Activated CD4-positive, alpha-beta memory T cell treated with anti-CD3 and anti-CD28 coated beads, Interleukin-2, amount 10 ng/mL, durations not matched to agents 7 days and 5 days (primary cell): ENCODE measurements at regions of chr20 and their contacts with region 1.

Region 1: GRCh38 chr20:51595058-51595532 is 52.6 kb upstream of the NFATC2 start:
- DNase-seq: peak; percentile 85
- H3K4me3 Mint-ChIP-seq: no peak overlapping the region
- H3K27ac Mint-ChIP-seq: peak overlapping the region; percentile 65
- H3K4me1 Mint-ChIP-seq: peaks cover 30% of the 10 kb centered on the region
- H3K27me3 Mint-ChIP-seq: peaks cover 11% of the 10 kb centered on the region

Region 2: GRCh38 chr20:51372176-51372803 is 222.8 kb before region 1 on chr20:
- CTCF ChIA-PET with region 1: interaction called, 47 read pairs
- POLR2A ChIA-PET with region 1: interaction called, 3 read pairs
- DNase-seq: peak; percentile 66
- H3K4me3 Mint-ChIP-seq: no peak overlapping the region
- H3K27ac Mint-ChIP-seq: no peak overlapping the region
- H3K4me1 Mint-ChIP-seq: peaks cover 18% of the 10 kb centered on the region
- H3K27me3 Mint-ChIP-seq: no peaks in the 10 kb centered on the region

Region 3: GRCh38 chr20:51385646-51386530 is 209.2 kb before region 1 on chr20:
- CTCF ChIA-PET with region 1: interaction called, 74 read pairs
- POLR2A ChIA-PET with region 1: interaction called, 9 read pairs
- DNase-seq: peak; percentile 49
- H3K4me3 Mint-ChIP-seq: no peak overlapping the region
- H3K27ac Mint-ChIP-seq: peak overlapping the region; percentile 61
- H3K4me1 Mint-ChIP-seq: peaks cover 73% of the 10 kb centered on the region
- H3K27me3 Mint-ChIP-seq: no peaks in the 10 kb centered on the region

Region 4: DNA sequence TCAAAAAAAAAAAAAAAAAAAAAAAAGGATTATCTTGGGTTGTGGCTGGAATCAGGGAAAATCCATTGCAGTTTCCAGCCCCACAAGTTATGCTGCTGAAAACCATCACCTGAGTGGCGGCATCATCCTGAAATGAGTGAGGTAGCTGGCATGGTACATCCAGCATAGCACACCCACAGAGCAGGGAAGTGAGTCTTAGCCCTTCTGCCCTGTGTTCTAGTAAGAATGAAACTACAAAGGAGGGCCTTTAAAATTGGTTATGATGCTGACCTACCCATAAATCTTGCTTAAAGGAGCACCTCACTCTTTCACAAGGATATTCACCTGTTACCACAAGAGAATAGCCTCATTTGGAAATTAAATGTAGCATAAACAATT is 171.8 kb before region 1 on chr20:
- CTCF ChIA-PET with region 1: interaction called, 12 read pairs
- POLR2A ChIA-PET with region 1: no interaction called
- DNase-seq: peak; percentile 56
- H3K4me3 Mint-ChIP-seq: peak overlapping the region; percentile 53
- H3K27ac Mint-ChIP-seq: peak overlapping the region; percentile 90
- H3K4me1 Mint-ChIP-seq: peaks cover 95% of the 10 kb centered on the region
- H3K27me3 Mint-ChIP-seq: no peaks in the 10 kb centered on the region

Region 5: DNA sequence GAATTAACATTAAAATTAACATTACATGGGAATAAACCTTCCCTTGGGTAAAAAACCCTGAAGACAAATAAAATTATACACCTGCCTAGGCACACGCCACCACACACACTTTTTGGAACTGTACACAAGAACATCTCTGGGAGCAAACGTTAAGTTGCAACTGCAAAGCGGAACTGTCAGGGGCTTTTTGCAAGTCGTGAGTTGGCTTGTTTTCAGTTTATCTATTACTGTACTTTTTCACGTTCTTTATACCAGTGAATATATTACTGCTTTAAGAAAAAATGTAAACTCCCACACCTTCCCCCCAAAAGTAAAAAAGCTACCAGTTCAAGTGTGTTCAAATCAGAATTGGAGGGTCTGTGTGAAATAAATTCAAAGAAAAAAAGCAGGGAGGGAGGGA is 13.0 kb after region 1 on chr20:
- CTCF ChIA-PET with region 1: interaction called, 13 read pairs
- POLR2A ChIA-PET with region 1: interaction called, 4 read pairs
- DNase-seq: no peak
- H3K4me3 Mint-ChIP-seq: peak overlapping the region; percentile 35
- H3K27ac Mint-ChIP-seq: peak overlapping the region; percentile 5
- H3K4me1 Mint-ChIP-seq: peaks cover 42% of the 10 kb centered on the region
- H3K27me3 Mint-ChIP-seq: peaks cover 10% of the 10 kb centered on the region

Region 6: GRCh38 chr20:51854908-51855307 is 259.8 kb after region 1 on chr20:
- CTCF ChIA-PET with region 1: no interaction called
- POLR2A ChIA-PET with region 1: no interaction called
- DNase-seq: no peak
- H3K4me3 Mint-ChIP-seq: no peak overlapping the region
- H3K27ac Mint-ChIP-seq: no peak overlapping the region
- H3K4me1 Mint-ChIP-seq: no peaks in the 10 kb centered on the region
- H3K27me3 Mint-ChIP-seq: peaks cover 7% of the 10 kb centered on the region